Endothelial cell of umbilical vein (primary cell): ENCODE measurements at regions of chr18 and their contacts with region 1.

Region 1: GRCh38 chr18:9094307-9095226 is 7.9 kb upstream of the NDUFV2 start:
- DNase-seq: peak; percentile 86
- H3K4me3 ChIP-seq: no peak overlapping the region
- H3K27ac ChIP-seq: peak overlapping the region; percentile 96
- H3K4me1 ChIP-seq: peaks cover 21% of the 10 kb centered on the region
- H3K27me3 ChIP-seq: no peaks in the 10 kb centered on the region
- CTCF ChIP-seq: no peak
- POLR2A ChIP-seq: no peak

Region 2: DNA sequence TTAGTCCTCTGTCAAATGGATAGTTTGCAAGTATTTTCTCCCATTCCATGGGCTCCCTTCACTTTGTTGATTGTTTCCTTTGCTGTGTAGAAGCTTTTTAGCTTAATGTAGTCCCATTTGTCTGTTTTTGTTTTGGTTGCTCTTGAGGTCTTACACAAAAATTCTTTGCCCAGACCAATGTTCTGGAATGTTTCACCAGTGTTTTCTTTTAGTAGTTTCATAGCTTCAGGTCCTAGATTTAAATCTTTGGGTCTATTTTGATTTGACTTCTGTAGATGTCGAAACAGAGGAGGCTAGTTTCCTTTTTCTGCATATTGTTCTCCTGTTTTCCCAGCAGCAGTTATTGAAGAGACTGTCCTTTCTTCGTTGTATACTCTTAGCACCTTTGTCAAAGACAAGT is 1175.9 kb before region 1 on chr18:
- CTCF ChIA-PET with region 1: no interaction called
- POLR2A ChIA-PET with region 1: no interaction called
- dilution Hi-C with region 1: no loop called
- intact Hi-C with region 1: no loop called
- DNase-seq: no peak
- H3K4me3 ChIP-seq: no peak overlapping the region
- H3K27ac ChIP-seq: no peak overlapping the region
- H3K4me1 ChIP-seq: peaks cover 20% of the 10 kb centered on the region
- H3K27me3 ChIP-seq: no peaks in the 10 kb centered on the region
- CTCF ChIP-seq: no peak
- POLR2A ChIP-seq: no peak

Region 3: DNA sequence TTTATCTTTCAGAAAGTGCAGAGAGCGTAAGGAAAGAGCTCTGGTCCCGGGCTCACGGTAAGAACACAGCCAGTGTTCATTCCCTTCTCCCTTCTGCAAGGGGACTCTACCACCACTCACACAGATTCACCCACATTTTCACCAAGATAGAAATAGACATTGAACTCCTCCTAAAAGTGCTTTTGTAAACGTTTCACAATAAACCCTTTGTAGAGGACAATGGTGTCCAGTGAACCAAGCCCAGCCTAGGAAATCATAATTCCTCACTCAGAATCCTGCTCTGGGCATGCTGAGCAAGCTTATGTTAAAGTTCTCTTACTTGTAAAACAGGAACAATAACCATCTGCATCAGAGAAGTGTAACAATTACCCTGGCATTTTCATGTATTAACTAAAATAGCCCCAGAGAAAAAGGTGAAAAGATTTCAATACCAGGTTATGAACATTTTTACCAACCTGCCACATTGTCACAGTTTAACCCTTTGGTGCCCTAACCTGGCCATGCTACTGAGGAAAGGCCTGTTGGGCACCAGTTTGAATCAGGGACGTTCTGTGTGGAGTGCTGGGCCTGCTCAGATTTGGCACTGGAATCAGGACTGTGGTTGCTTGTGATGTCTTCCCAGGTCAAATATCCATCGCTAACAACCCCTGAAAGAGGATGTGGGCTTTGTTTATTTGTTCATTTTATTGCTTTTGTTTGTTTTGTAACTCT is 14.6 kb before region 1 on chr18:
- CTCF ChIA-PET with region 1: interaction called, 16 read pairs
- POLR2A ChIA-PET with region 1: no interaction called
- dilution Hi-C with region 1: no loop called
- intact Hi-C with region 1: no loop called
- DNase-seq: no peak
- H3K4me3 ChIP-seq: no peak overlapping the region
- H3K27ac ChIP-seq: no peak overlapping the region
- H3K4me1 ChIP-seq: no peaks in the 10 kb centered on the region
- H3K27me3 ChIP-seq: no peaks in the 10 kb centered on the region
- CTCF ChIP-seq: no peak
- POLR2A ChIP-seq: no peak

Region 4: DNA sequence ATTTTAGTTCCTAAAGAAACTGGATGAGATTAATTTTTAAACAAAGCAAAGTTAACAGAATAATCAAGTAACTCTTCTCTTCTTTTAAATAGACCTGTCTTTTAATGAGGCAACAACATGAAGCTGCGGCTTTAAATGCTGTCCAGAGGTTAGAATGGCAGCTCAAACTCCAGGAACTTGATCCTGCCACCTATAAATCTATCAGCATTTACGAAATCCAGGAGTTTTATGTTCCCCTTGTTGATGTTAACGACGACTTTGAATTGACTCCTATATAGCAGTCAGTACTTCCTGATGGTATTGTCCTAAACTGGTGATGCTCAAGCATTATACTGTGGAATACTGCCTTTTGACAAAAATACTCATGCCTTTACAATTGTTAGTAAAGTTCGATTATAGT is 186.3 kb after region 1 on chr18:
- CTCF ChIA-PET with region 1: no interaction called
- POLR2A ChIA-PET with region 1: interaction called, 11 read pairs
- dilution Hi-C with region 1: no loop called
- intact Hi-C with region 1: no loop called
- DNase-seq: no peak
- H3K4me3 ChIP-seq: no peak overlapping the region
- H3K27ac ChIP-seq: no peak overlapping the region
- H3K4me1 ChIP-seq: no peaks in the 10 kb centered on the region
- H3K27me3 ChIP-seq: no peaks in the 10 kb centered on the region
- CTCF ChIP-seq: no peak
- POLR2A ChIP-seq: no peak